ENCODE measurements at regions of chr2 and their contacts with region 1.

Region 1: GRCh38 chr2:112636231-112636960 is 9.3 kb upstream of the SLC20A1 start:
- DNase-seq: peak; percentile 54
- ATAC-seq: peak; percentile 46
- H3K4me3 Mint-ChIP-seq: no peak overlapping the region
- H3K27ac Mint-ChIP-seq: no peak overlapping the region
- H3K4me1 Mint-ChIP-seq: peaks cover 71% of the 10 kb centered on the region
- H3K27me3 Mint-ChIP-seq: no peaks in the 10 kb centered on the region

Region 2: GRCh38 chr2:112706170-112706664 is 69.8 kb after region 1 on chr2:
- CTCF ChIA-PET with region 1: no interaction called
- POLR2A ChIA-PET with region 1: no interaction called
- intact Hi-C with region 1: loop called in 1 of 2 experiments (anchors 5 kb)
- DNase-seq: peak; percentile 78
- ATAC-seq: peak; percentile 93
- H3K4me3 Mint-ChIP-seq: no peak overlapping the region
- H3K27ac Mint-ChIP-seq: no peak overlapping the region
- H3K4me1 Mint-ChIP-seq: peaks cover 31% of the 10 kb centered on the region
- H3K27me3 Mint-ChIP-seq: peaks cover 11% of the 10 kb centered on the region